HCT116 (cell line): ENCODE measurements at regions of chr17 and their contacts with region 1.

Region 1: GRCh38 chr17:31446195-31446967 is 54.9 kb downstream of the RAB11FIP4 start:
- DNase-seq: no peak
- ATAC-seq: no peak; the same call in 1 of the 2 replicates
- H3K4me3 ChIP-seq: no peak overlapping the region
- H3K27ac ChIP-seq: no peak overlapping the region
- H3K4me1 ChIP-seq: peaks cover 0 to 12% of the 10 kb centered on the region in 2 experiments; a peak in 2 of 4 replicates
- H3K27me3 ChIP-seq: no peaks in the 10 kb centered on the region
- CTCF ChIP-seq: peak; percentile 37 to 49 (median 38); a peak in 5 of 6 replicates
- POLR2A ChIP-seq: no peak
- RAD21 ChIP-seq: peak; percentile 46; the same call in 1 of the 2 replicates

Region 2: GRCh38 chr17:31508288-31509094 is 62.1 kb after region 1 on chr17:
- CTCF ChIA-PET with region 1: no interaction called
- POLR2A ChIA-PET with region 1: no interaction called
- RAD21 ChIA-PET with region 1: no interaction called
- intact Hi-C with region 1: loop called (anchors 2 kb)
- DNase-seq: no peak
- ATAC-seq: peak; percentile 77
- H3K4me3 ChIP-seq: no peak overlapping the region
- H3K27ac ChIP-seq: no peak overlapping the region
- H3K4me1 ChIP-seq: no peaks in the 10 kb centered on the region; a peak in 1 of 4 replicates
- H3K27me3 ChIP-seq: no peaks in the 10 kb centered on the region
- CTCF ChIP-seq: peak; percentile 13 to 51 (median 44); a peak in 4 of 6 replicates
- POLR2A ChIP-seq: no peak
- RAD21 ChIP-seq: peak; percentile 37; the same call in 1 of the 2 replicates